PC-9 (cell line): ENCODE measurements at regions of chr12 and their contacts with region 1.

Region 1: DNA sequence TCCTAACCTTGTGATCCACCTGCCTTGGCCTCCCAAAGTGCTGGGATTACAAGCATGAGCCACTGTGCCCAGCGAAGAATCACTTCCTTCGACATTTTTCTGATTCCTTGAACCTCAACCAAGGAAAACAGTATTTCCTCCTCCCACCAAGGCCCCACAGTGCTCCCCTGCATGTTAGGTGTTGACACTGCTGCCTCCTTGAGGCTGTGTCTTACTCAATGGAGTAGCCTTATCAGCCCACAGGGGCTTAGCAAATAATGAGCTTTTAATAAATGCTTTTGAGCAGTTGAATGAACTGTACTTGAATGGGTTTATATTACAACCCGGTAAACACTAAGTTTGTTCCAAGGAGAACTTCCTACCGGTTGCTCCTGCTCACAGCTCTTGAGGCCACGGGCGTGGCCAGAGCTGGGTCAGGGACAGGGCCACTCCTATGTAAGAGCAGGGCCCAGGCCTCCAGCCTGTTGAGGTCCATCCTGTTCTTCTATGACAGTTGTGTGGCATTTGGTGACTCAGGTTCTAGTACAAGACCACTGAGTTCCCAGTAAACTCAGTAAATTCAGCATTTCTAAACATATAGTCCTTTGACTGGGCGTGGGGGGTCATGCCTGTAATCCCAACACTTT is 36.8 kb upstream of the TUBA1A start:
- DNase-seq: peak; percentile 31 to 39
- H3K4me3 ChIP-seq: no peak overlapping the region
- H3K27ac ChIP-seq: no peak overlapping the region
- H3K4me1 ChIP-seq: peaks cover 9% of the 10 kb centered on the region
- H3K27me3 ChIP-seq: no peaks in the 10 kb centered on the region
- CTCF ChIP-seq: no peak

Region 2: DNA sequence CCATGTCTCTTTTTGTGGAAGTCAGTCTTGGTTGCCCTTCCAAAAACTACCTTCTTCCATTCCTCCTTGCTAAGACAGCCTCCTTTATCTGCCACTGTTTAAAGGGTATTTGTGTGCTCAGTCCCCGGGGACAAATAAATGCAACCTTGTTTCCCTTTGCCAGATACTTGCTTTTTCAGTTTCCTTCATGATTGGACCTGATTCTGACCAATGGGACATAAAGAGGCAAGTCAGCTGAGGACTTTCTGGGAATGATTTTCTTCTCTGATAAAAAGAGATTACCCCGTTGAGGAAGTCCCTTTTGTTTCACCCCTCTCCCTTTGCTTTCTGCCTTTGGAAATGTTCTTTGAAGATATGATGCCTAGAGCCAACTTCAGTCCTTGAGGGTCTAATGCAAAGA is 87.1 kb before region 1 on chr12:
- CTCF ChIA-PET with region 1: interaction called, 3 read pairs
- POLR2A ChIA-PET with region 1: interaction called, 22 read pairs
- intact Hi-C with region 1: no loop called
- DNase-seq: no peak
- H3K4me3 ChIP-seq: no peak overlapping the region
- H3K27ac ChIP-seq: no peak overlapping the region
- H3K4me1 ChIP-seq: no peaks in the 10 kb centered on the region
- H3K27me3 ChIP-seq: no peaks in the 10 kb centered on the region
- CTCF ChIP-seq: no peak

Region 3: GRCh38 chr12:49200919-49201594 is 24.6 kb before region 1 on chr12:
- CTCF ChIA-PET with region 1: interaction called, 6 read pairs
- POLR2A ChIA-PET with region 1: no interaction called
- intact Hi-C with region 1: loop called (anchors 2 kb)
- DNase-seq: peak; percentile 7 to 78
- H3K4me3 ChIP-seq: no peak overlapping the region; the same call in 1 of the 2 replicates
- H3K27ac ChIP-seq: peak overlapping the region; percentile 88
- H3K4me1 ChIP-seq: peaks cover 29% of the 10 kb centered on the region
- H3K27me3 ChIP-seq: no peaks in the 10 kb centered on the region
- CTCF ChIP-seq: no peak